MCF 10A (cell line): ENCODE measurements at regions of chr1 and their contacts with region 1.

Region 1: DNA sequence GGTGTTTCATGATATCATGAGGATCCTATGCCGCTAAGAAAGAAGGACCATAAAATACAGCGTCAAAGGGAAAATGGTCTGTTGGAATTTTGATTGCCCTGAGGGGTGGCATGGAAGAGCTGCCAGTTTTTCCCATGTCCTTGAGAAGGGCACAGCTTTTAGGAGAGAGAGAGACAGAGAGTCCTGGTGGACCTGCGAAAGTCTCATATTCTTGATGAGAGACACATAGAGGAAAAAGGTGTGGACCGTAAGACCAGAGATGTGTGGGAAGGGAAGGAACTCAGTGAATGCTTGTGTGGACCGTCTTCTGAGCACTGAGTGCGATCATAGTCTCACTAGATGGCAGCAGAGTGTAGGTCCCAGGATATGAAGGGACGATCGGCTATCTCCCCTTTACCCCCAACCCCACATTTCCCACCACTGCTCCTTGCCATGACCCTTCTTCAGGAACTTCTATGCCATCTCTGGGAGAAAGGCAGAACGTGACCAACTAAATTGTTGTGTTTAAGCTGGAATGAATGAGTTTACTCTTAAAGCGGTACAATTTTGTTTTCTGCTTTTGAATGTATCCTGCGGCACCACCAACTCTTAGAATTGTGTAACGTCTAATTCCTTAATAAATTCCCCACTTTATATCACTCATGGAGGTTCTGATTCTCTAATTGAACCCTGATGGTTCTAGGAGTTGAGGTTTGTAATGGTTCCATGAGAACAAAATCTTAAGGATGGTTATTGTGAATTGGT is 117.7 kb downstream of the CTH start:
- DNase-seq: peak; percentile 39
- H3K4me3 Mint-ChIP-seq: no peak overlapping the region
- H3K27ac Mint-ChIP-seq: no peak overlapping the region
- H3K4me1 Mint-ChIP-seq: no peaks in the 10 kb centered on the region
- H3K27me3 Mint-ChIP-seq: peaks cover 66% of the 10 kb centered on the region
- CTCF ChIP-seq: peak; percentile 41

Region 2: DNA sequence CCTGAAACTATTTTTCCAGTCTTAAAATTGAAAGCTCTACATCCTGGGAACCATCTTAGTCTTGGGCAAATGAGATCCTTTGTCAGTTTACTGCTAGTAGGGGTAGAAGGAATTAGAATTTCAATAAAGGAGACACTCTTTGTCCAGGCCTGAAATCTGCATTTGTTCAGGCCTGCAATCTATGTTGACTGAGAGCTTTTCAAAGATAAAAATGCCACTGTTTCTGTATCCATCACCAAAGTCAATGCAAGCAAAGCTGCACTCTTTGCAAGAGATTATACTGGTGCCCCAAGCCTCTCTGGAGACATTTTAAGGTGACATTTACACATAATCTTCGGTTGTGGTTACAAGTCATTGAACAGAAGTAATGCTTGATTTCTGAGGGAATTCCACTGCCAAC is 18.0 kb after region 1 on chr1:
- CTCF ChIA-PET with region 1: interaction called, 14 read pairs
- POLR2A ChIA-PET with region 1: no interaction called
- intact Hi-C with region 1: no loop called
- DNase-seq: no peak
- H3K4me3 Mint-ChIP-seq: no peak overlapping the region
- H3K27ac Mint-ChIP-seq: no peak overlapping the region
- H3K4me1 Mint-ChIP-seq: no peaks in the 10 kb centered on the region
- H3K27me3 Mint-ChIP-seq: peaks cover 53% of the 10 kb centered on the region
- CTCF ChIP-seq: no peak

Region 3: GRCh38 chr1:70896224-70896623 is 367.5 kb after region 1 on chr1:
- CTCF ChIA-PET with region 1: interaction called, 4 read pairs
- POLR2A ChIA-PET with region 1: no interaction called
- intact Hi-C with region 1: loop called (anchors 2 kb)
- DNase-seq: peak; percentile 22
- H3K4me3 Mint-ChIP-seq: no peak overlapping the region
- H3K27ac Mint-ChIP-seq: no peak overlapping the region
- H3K4me1 Mint-ChIP-seq: no peaks in the 10 kb centered on the region
- H3K27me3 Mint-ChIP-seq: peaks cover 59% of the 10 kb centered on the region
- CTCF ChIP-seq: peak; percentile 22

Region 4: DNA sequence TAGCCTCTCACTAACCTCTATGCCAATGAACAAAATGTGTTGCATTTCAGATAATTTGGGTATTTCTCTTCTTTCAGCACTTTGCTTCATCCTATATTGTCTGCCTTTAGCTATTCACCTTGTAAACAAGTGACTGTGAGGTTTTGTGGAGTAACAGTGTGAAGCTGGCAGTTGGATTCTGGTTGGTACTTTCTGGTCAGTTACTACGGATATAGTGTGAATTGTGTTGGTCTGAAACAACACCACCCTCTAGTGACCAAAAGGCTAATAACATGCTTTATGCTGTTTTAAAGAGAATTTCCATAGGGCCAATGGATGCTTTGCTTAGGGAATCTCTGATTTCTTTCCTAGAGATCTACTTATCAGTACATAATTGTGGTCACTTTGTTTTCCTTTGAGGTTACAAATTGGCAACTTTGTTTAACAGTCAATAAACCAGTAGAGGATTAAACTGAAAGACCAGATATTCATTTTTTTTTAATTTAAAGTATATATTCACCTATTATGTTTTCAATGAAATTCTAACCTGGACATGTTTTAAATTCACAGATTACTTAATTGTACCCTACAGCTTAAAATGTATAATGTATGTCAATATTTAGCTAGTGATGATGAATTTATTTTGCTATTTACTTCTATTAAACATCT is 521.3 kb after region 1 on chr1:
- CTCF ChIA-PET with region 1: interaction called, 50 read pairs
- POLR2A ChIA-PET with region 1: interaction called, 4 read pairs
- intact Hi-C with region 1: loop called (anchors 1 kb)
- DNase-seq: peak; percentile 69
- H3K4me3 Mint-ChIP-seq: no peak overlapping the region
- H3K27ac Mint-ChIP-seq: no peak overlapping the region
- H3K4me1 Mint-ChIP-seq: no peaks in the 10 kb centered on the region
- H3K27me3 Mint-ChIP-seq: peaks cover 47% of the 10 kb centered on the region
- CTCF ChIP-seq: peak; percentile 58